ENCODE measurements at regions of chr4 and their contacts with region 1.

Region 1: GRCh38 chr4:89324671-89325070 is 17.1 kb upstream of the GPRIN3 start:
- DNase-seq: no peak
- ATAC-seq: peak; percentile 35 to 59 (median 47)
- H3K4me3 ChIP-seq: no peak overlapping the region
- H3K4me3 Mint-ChIP-seq: no peak overlapping the region
- H3K27ac ChIP-seq: no peak overlapping the region
- H3K27ac Mint-ChIP-seq: no peak overlapping the region
- H3K4me1 ChIP-seq: no peaks in the 10 kb centered on the region
- H3K4me1 Mint-ChIP-seq: peaks cover 0 to 4% of the 10 kb centered on the region in 2 donors
- H3K27me3 ChIP-seq: no peaks in the 10 kb centered on the region
- H3K27me3 Mint-ChIP-seq: no peaks in the 10 kb centered on the region
- CTCF ChIP-seq: no peak

Region 2: DNA sequence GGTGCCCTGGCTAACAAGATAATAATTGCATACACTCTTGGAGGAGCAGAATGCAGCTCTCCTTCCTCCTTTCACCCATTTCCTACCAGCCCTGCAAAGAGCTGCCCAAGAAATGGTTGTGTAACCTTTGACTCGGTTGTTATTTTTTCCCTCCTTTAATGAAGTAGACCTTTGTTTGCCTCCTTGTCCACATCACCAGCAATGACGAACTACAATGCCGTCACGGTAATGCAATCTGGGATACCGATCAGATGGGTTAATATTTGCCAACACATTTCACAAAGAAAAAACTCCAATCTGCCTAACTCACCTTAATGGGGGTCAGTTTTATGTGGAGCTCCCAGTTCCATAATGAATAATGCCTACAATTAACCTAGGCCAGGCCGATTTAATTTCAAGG is 49.1 kb before region 1 on chr4:
- intact Hi-C with region 1: no loop called
- DNase-seq: no peak
- ATAC-seq: no peak
- H3K4me3 ChIP-seq: no peak overlapping the region
- H3K4me3 Mint-ChIP-seq: no peak overlapping the region
- H3K27ac ChIP-seq: no peak overlapping the region
- H3K27ac Mint-ChIP-seq: no peak overlapping the region
- H3K4me1 ChIP-seq: peaks cover 18% of the 10 kb centered on the region
- H3K4me1 Mint-ChIP-seq: peaks cover 48 to 50% of the 10 kb centered on the region in 2 donors
- H3K27me3 ChIP-seq: no peaks in the 10 kb centered on the region
- H3K27me3 Mint-ChIP-seq: no peaks in the 10 kb centered on the region
- CTCF ChIP-seq: no peak

Region 3: DNA sequence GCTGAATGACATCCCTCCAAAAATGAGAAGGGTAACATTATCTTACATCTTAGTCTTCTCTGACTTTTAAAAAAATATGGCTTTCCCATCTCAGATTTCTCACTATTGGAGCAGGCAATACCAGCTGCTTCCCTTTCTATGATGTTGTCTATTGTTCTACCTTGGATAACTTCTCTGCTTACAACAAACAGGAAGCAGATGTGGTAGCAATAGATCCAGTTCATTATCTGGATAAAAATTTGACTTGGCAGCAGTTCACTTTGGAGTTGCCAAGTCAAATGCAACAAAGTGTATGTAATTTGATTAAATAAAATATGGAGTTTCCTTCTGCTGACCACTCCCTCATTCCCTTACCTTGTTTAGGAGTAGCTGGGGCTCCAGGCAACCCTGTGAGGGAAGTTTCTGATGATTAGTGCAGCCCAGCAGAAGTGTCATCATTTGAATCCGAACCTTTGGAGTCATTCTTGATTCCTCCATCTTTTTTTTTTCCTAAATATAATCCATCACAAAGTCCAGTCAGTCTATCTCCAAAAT is 54.9 kb after region 1 on chr4:
- intact Hi-C with region 1: loop called (anchors 10 kb)
- DNase-seq: no peak
- ATAC-seq: no peak
- H3K4me3 ChIP-seq: no peak overlapping the region
- H3K4me3 Mint-ChIP-seq: no peak overlapping the region
- H3K27ac ChIP-seq: no peak overlapping the region
- H3K27ac Mint-ChIP-seq: no peak overlapping the region
- H3K4me1 ChIP-seq: no peaks in the 10 kb centered on the region
- H3K4me1 Mint-ChIP-seq: peaks cover 0 to 4% of the 10 kb centered on the region in 2 donors
- H3K27me3 ChIP-seq: no peaks in the 10 kb centered on the region
- H3K27me3 Mint-ChIP-seq: peaks cover 0 to 4% of the 10 kb centered on the region in 2 donors
- CTCF ChIP-seq: no peak

Region 4: GRCh38 chr4:89914609-89915550 is 590.2 kb after region 1 on chr4:
- intact Hi-C with region 1: no loop called
- DNase-seq: no peak
- ATAC-seq: no peak
- H3K4me3 ChIP-seq: no peak overlapping the region
- H3K4me3 Mint-ChIP-seq: no peak overlapping the region
- H3K27ac ChIP-seq: no peak overlapping the region
- H3K27ac Mint-ChIP-seq: no peak overlapping the region
- H3K4me1 ChIP-seq: no peaks in the 10 kb centered on the region
- H3K4me1 Mint-ChIP-seq: no peaks in the 10 kb centered on the region
- H3K27me3 ChIP-seq: no peaks in the 10 kb centered on the region
- H3K27me3 Mint-ChIP-seq: no peaks in the 10 kb centered on the region
- CTCF ChIP-seq: no peak

Measured in natural killer cell (primary cell).